Heart right ventricle (tissue), 16 donors: ENCODE measurements at regions of chr5 and their contacts with region 1.

Region 1: GRCh38 chr5:55146543-55147151 is 13.3 kb upstream of the GPX8 start:
- DNase-seq: peak; percentile 45 to 76
- ATAC-seq: peak in 7 of 8 donors; percentile 58 to 93 (median 78)
- H3K4me3 ChIP-seq: no peak overlapping the region
- H3K27ac ChIP-seq: no peak overlapping the region
- H3K4me1 ChIP-seq: peaks cover 0 to 7% (median 0%) of the 10 kb centered on the region in 9 donors
- H3K27me3 ChIP-seq: peaks cover 0 to 40% (median 24%) of the 10 kb centered on the region in 7 donors
- CTCF ChIP-seq: peak; percentile 76 to 98 (median 96)

Region 2: DNA sequence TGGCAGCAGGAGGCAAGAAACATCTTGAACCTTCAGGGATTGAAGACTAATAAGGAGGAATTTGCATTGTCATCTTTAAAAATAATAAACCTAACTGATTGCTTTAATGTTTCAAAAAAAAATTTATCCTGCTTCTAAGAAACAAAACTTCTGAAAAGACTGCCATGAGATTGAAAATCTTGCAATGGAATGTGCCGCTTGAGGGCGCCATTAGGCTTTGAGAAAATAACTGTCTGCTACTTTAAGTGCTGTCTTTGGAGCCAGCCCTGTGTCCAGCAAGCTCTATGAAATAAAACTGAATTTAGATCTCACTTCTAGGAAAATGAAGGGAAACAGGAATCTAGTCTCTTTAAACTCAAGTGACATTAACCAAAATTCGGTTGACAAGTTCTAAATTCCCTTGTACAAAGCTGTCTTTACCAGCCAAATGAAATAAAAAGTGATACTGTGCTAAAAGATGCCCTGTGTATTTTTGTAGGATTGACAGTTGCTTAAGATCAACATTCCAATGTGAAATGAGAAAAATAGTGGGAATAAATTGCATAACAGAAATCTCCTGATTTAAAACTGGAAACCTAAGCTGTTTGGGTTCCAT is 240.6 kb before region 1 on chr5:
- intact Hi-C with region 1: loop called (anchors 2 to 10 kb)
- DNase-seq: peak; percentile 37 to 56
- ATAC-seq: no peak
- H3K4me3 ChIP-seq: no peak overlapping the region
- H3K27ac ChIP-seq: no peak overlapping the region
- H3K4me1 ChIP-seq: peaks cover 0 to 18% (median 0%) of the 10 kb centered on the region in 9 donors
- H3K27me3 ChIP-seq: peaks cover 0 to 5% (median 0%) of the 10 kb centered on the region in 7 donors
- CTCF ChIP-seq: peak; percentile 32 to 82 (median 73)